Mammary epithelial cell (primary cell): ENCODE measurements at regions of chr15 and their contacts with region 1.

Region 1: GRCh38 chr15:74635228-74635627 is 19.6 kb downstream of the CLK3 start:
- DNase-seq: peak; percentile 55
- H3K4me3 ChIP-seq: no peak overlapping the region
- H3K27ac ChIP-seq: no peak overlapping the region
- H3K4me1 ChIP-seq: no peaks in the 10 kb centered on the region
- H3K27me3 ChIP-seq: no peaks in the 10 kb centered on the region
- CTCF ChIP-seq: peak; percentile 88 to 96

Region 2: GRCh38 chr15:74438721-74439316 is 196.4 kb before region 1 on chr15:
- CTCF ChIA-PET with region 1: no interaction called
- dilution Hi-C with region 1: no loop called
- in situ Hi-C with region 1: no loop called
- intact Hi-C with region 1: loop called (anchors 5 kb)
- DNase-seq: peak; percentile 73
- H3K4me3 ChIP-seq: no peak overlapping the region
- H3K27ac ChIP-seq: no peak overlapping the region
- H3K4me1 ChIP-seq: peaks cover 4% of the 10 kb centered on the region
- H3K27me3 ChIP-seq: no peaks in the 10 kb centered on the region
- CTCF ChIP-seq: peak; percentile 97 to 98

Region 3: GRCh38 chr15:74565381-74566085 is 69.7 kb before region 1 on chr15:
- CTCF ChIA-PET with region 1: no interaction called
- dilution Hi-C with region 1: no loop called
- in situ Hi-C with region 1: no loop called
- intact Hi-C with region 1: no loop called
- DNase-seq: no peak
- H3K4me3 ChIP-seq: no peak overlapping the region
- H3K27ac ChIP-seq: no peak overlapping the region
- H3K4me1 ChIP-seq: no peaks in the 10 kb centered on the region
- H3K27me3 ChIP-seq: no peaks in the 10 kb centered on the region
- CTCF ChIP-seq: no peak

Region 4: DNA sequence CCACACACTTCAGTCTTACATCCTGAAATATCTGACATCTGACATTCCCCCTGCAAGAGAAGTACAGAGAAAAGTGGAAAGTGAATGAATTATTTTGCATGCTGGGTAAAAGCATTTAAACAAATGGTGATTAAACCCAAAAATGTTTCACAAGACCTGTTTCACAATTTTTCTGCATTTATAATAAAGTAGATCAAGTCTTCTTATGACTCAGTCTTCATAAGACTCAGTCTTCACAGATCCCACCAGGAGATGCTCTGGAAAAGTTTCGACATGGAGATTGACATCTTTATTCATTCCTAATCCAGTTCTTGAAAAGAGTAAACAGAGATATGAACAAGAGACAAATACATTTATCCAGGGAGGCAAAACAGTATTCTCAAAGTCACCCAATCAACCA is 73.8 kb after region 1 on chr15:
- CTCF ChIA-PET with region 1: no interaction called
- dilution Hi-C with region 1: loop called (anchors 5 kb)
- in situ Hi-C with region 1: no loop called
- intact Hi-C with region 1: no loop called
- DNase-seq: no peak
- H3K4me3 ChIP-seq: no peak overlapping the region
- H3K27ac ChIP-seq: no peak overlapping the region
- H3K4me1 ChIP-seq: no peaks in the 10 kb centered on the region
- H3K27me3 ChIP-seq: no peaks in the 10 kb centered on the region
- CTCF ChIP-seq: no peak

Region 5: DNA sequence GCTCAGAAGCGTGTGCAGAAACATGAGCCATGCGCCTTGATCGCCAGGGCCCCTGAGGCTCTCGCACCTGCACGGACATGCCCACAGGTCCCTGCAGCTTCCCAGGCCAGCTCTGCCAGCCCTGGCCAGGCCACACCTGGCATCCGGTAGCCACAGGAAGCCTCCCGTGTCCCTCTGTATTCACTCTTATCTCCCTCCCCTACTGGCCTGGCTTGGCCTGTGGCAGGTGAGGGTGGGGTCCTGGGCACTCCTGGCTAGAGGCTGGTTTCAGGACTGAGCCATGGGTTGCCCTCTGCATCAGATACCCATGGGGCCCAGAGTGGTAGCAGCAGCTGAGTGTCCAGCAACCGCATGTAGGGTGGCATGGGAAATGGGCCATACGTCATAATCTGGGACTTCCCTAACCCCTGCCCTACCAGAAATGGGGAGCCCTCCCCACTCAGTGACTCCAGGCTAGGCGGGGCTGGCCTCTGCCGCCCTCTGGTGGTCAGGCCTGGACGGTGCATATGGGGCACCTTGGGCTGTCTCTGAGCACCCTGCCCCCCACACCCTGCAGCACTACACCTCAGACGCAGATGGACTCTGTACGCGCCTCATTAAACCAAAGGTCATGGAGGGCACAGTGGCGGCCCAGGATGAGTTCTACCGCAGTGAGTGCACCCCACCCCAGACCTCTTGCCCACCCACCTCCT is 164.8 kb after region 1 on chr15:
- CTCF ChIA-PET with region 1: no interaction called
- dilution Hi-C with region 1: no loop called
- in situ Hi-C with region 1: no loop called
- intact Hi-C with region 1: loop called (anchors 1 kb)
- DNase-seq: peak; percentile 95
- H3K4me3 ChIP-seq: peak overlapping the region in 1 of 3 experiments; percentile 12
- H3K27ac ChIP-seq: peak overlapping the region; percentile 91
- H3K4me1 ChIP-seq: peaks cover 28% of the 10 kb centered on the region
- H3K27me3 ChIP-seq: no peaks in the 10 kb centered on the region
- CTCF ChIP-seq: peak; percentile 96 to 100

Region 6: GRCh38 chr15:74956648-74957300 is 321.5 kb after region 1 on chr15 and contains the start of gene RPP25:
- CTCF ChIA-PET with region 1: no interaction called
- dilution Hi-C with region 1: no loop called
- in situ Hi-C with region 1: loop called in 1 of 2 experiments (anchors 10 kb)
- intact Hi-C with region 1: no loop called
- DNase-seq: peak; percentile 58
- H3K4me3 ChIP-seq: peak within 1 kb of the TSS; percentile 22 to 49 (median 45)
- H3K27ac ChIP-seq: no peak within 1 kb of the TSS
- H3K4me1 ChIP-seq: peaks cover 20% of the 10 kb centered on the region
- H3K27me3 ChIP-seq: peaks cover 15% of the 10 kb centered on the region
- CTCF ChIP-seq: no peak
- total RNA-seq, gene RPP25: 0.28 to 1.2 TPM